ENCODE measurements at regions of chr7 and their contacts with region 1.

Region 1: GRCh38 chr7:5665094-5666025 is 116.1 kb downstream of the RNF216 start:
- DNase-seq: peak; percentile 65 to 82
- H3K4me3 ChIP-seq: no peak overlapping the region
- H3K27ac ChIP-seq: no peak overlapping the region
- H3K4me1 ChIP-seq: no peaks in the 10 kb centered on the region
- H3K27me3 ChIP-seq: no peaks in the 10 kb centered on the region
- CTCF ChIP-seq: peak; percentile 92

Region 2: DNA sequence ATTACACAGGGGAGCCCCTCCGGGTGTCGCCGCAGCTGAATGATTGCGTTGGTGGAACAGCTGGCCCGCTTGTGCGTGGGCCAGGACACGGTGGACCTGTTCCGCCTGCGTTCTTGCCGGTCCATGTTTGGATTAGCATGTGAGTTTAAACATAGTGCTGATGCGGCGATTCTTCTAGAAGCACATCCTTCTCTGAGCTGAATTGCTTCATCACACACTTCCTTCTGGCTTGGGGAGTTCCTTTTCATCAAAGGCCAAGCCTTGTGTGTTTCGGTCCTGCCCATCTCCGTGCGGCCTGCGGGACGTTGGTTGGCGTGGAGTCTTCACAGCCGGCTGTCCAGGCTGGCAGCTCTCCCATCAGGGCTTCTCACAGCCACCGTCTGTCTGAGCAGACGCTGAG is 428.1 kb before region 1 on chr7:
- CTCF ChIA-PET with region 1: interaction called, 12 read pairs
- POLR2A ChIA-PET with region 1: no interaction called
- intact Hi-C with region 1: no loop called
- DNase-seq: no peak
- H3K4me3 ChIP-seq: no peak overlapping the region
- H3K27ac ChIP-seq: no peak overlapping the region
- H3K4me1 ChIP-seq: peaks cover 19% of the 10 kb centered on the region
- H3K27me3 ChIP-seq: no peaks in the 10 kb centered on the region
- CTCF ChIP-seq: no peak

Region 3: DNA sequence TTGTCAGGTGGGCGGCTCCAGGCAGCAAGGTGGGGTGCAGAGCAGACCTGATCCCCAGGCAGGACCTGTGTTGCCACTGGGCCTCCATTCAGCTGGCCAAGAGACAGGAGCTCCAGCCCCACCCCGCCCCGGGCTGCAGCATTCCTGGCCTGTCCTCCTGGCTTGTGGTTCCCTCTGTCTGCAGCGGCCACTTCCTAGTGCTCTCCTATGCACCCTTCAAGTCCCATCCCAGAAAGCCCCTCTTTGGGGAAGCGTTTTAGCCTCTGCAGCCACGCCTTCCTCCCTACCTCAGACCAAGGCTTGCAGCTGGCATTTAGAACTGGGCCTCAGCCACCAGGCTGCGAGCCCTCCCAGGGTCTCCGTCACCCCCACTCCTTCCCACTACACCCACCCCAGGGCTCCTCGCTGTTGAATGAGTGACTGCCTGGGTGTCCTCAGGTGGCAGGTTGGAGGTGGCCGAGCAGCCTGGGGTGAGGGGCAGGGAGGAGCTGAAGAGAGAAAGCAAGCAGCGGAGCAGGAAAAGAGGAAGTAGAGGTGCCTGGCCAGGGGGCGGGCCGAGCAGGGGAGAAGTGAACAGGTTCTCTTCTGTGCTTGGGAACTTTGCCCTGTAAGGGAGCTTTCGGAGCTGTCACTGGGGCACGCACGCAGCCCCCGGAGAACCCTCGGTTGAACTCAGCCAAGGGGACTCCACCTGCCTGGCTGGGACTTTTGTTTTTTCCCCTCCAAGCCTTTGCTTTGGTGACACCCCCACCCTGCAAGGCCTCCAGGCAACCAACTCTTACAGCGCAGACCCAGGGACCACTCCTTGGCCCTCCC is 132.6 kb before region 1 on chr7:
- CTCF ChIA-PET with region 1: no interaction called
- POLR2A ChIA-PET with region 1: interaction called, 18 read pairs
- intact Hi-C with region 1: no loop called
- DNase-seq: peak; percentile 65 to 85
- H3K4me3 ChIP-seq: no peak overlapping the region
- H3K27ac ChIP-seq: no peak overlapping the region
- H3K4me1 ChIP-seq: peaks cover 32% of the 10 kb centered on the region
- H3K27me3 ChIP-seq: no peaks in the 10 kb centered on the region
- CTCF ChIP-seq: no peak

Region 4: DNA sequence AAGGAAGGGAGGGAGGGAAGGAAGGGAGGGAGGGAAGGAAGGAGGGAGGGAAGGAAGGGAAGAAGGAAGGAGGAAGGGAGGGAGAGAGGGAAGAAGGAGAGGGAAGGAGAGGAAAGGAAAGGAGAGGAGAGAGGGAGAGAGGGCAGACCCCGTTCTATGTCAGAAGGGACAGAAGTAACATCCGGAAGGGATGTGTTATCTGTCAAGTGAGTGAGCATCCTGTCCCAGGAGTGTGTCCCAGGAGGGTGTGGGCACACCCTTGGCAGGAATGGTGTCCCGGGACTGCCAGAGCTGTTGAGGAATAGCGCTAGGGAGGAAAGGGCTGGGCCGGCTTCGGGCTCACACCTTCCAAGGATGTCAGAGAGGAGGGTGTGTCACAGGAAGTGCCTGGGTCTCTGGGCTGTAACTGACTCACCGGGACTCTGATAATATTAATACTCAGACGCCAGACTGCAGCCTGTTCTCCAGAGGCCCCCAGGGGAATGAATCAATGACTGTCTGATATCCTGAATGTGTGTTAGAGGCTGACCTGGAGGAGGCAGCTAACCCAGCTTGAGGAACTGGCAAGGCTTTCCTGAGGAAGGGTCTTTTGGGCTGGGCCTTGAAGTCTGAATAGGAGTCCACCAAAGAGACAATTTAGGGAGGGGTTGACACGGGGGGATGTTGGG is 116.1 kb before region 1 on chr7:
- CTCF ChIA-PET with region 1: no interaction called
- POLR2A ChIA-PET with region 1: no interaction called
- intact Hi-C with region 1: no loop called
- DNase-seq: peak; percentile 90 to 98
- H3K4me3 ChIP-seq: no peak overlapping the region
- H3K27ac ChIP-seq: peak overlapping the region; percentile 73
- H3K4me1 ChIP-seq: peaks cover 22% of the 10 kb centered on the region
- H3K27me3 ChIP-seq: no peaks in the 10 kb centered on the region
- CTCF ChIP-seq: no peak; the same call in 1 of the 2 replicates

Region 5: GRCh38 chr7:5596046-5596895 is 69.1 kb before region 1 on chr7:
- CTCF ChIA-PET with region 1: interaction called, 3 read pairs
- POLR2A ChIA-PET with region 1: interaction called, 3 read pairs
- intact Hi-C with region 1: loop called (anchors 1 kb)
- DNase-seq: peak; percentile 83 to 86
- H3K4me3 ChIP-seq: peak overlapping the region; percentile 80
- H3K27ac ChIP-seq: peak overlapping the region; percentile 60
- H3K4me1 ChIP-seq: peaks cover 53% of the 10 kb centered on the region
- H3K27me3 ChIP-seq: no peaks in the 10 kb centered on the region
- CTCF ChIP-seq: no peak

Region 6: DNA sequence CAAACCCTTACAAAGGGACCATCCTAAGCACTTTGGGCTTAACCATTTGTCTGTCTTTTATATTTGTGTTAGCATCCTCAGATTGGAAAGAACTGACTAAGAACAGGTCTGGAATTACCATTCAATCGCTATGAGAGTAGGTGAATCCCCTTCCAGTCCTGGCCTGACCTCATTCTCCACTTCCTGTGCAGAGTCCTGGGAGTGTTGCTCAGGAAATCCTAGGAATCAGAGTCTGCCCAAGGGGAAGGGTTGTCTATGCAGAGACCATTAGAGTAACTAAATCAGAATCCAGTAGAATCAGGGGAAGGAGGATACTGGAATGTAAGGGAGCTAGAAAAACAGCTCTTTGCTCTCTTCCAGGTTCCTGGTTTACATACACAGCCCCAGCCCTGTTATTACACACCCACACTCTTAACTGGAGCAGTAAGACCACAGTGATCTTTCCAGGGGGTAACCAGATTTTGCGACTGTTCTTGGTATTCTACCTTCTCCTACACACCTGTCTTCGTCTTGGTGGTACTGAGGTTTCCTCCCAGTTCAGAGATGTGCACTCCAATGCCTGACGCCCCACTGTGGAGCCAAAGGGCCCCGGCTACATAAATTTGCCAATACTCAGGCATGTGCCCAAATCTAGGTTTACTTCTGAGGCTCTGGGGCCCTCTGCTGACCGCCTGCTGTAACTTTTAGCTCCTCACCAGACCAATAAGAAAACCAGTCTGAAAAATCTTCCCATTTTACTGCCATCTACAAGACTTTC is 12.4 kb after region 1 on chr7:
- CTCF ChIA-PET with region 1: interaction called, 10 read pairs
- POLR2A ChIA-PET with region 1: no interaction called
- intact Hi-C with region 1: no loop called
- DNase-seq: peak; percentile 62 to 69
- H3K4me3 ChIP-seq: no peak overlapping the region
- H3K27ac ChIP-seq: no peak overlapping the region
- H3K4me1 ChIP-seq: no peaks in the 10 kb centered on the region
- H3K27me3 ChIP-seq: no peaks in the 10 kb centered on the region
- CTCF ChIP-seq: peak; percentile 87

Region 7: DNA sequence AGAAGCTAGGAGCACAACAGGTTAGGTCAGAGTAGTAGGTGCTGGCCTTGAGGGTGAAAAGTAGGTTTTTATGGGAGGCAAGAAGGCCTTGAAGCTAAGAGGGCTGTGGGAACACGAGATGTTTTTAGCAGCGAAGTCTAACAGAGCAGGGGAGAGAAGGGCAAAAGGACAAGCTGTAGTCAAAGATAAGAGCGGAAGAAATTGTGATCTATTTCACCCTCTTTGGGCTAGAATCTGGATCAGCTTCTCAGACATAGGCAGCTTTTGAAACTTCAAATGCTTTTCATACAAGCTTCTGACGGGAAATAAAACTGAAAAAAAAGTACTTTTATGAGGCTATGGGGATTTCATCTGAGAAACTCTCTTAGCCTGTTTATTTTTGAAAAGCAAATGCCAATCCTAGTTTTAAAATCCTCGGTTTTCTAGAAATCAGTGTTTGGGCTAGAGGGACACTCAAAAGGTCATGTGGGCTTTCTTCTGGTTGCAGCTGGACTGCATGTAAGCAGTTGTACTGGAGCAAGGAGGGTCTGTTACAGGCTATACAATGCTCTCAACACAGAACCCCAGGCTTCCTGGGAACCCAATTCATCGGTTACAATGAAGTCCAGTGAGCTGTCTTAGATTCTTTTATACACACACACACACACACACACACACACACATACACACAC is 32.5 kb after region 1 on chr7:
- CTCF ChIA-PET with region 1: no interaction called
- POLR2A ChIA-PET with region 1: no interaction called
- intact Hi-C with region 1: no loop called
- DNase-seq: no peak
- H3K4me3 ChIP-seq: no peak overlapping the region
- H3K27ac ChIP-seq: no peak overlapping the region
- H3K4me1 ChIP-seq: peaks cover 22% of the 10 kb centered on the region
- H3K27me3 ChIP-seq: no peaks in the 10 kb centered on the region
- CTCF ChIP-seq: no peak